Endothelial cell of umbilical vein (primary cell): ENCODE measurements at regions of chr10 and their contacts with region 1.

Region 1: GRCh38 chr10:122051251-122051996 is 62.5 kb downstream of the TACC2 start:
- DNase-seq: peak; percentile 77
- H3K4me3 ChIP-seq: no peak overlapping the region
- H3K27ac ChIP-seq: no peak overlapping the region
- H3K4me1 ChIP-seq: peaks cover 15% of the 10 kb centered on the region
- H3K27me3 ChIP-seq: no peaks in the 10 kb centered on the region
- CTCF ChIP-seq: peak; percentile 75 to 89
- POLR2A ChIP-seq: no peak

Region 2: DNA sequence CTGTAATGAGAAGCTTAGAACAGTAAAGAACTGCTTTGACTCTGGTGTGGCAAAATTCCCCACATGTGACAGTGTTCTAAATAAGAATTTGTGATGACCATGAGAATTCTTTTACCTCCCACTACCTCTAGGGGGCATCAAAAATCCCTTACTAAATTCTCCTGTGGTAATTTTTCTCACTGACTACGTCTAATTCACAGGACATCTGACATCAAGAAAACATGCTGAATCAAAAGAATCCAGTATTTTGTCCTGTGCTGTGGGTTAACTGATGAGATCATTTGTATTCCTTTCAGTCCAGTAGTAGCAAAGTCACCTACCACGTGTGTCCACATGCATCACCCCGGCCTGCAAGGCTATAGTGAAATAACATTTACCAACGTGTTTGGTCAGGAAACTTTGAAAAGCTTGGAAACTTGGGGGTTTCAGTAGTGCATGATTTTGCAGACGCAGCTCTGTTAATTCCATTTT is 227.4 kb before region 1 on chr10:
- CTCF ChIA-PET with region 1: interaction called, 6 read pairs
- POLR2A ChIA-PET with region 1: no interaction called
- dilution Hi-C with region 1: no loop called
- intact Hi-C with region 1: loop called (anchors 5 kb)
- DNase-seq: peak; percentile 54
- H3K4me3 ChIP-seq: no peak overlapping the region
- H3K27ac ChIP-seq: no peak overlapping the region
- H3K4me1 ChIP-seq: no peaks in the 10 kb centered on the region
- H3K27me3 ChIP-seq: no peaks in the 10 kb centered on the region
- CTCF ChIP-seq: peak; percentile 40 to 59
- POLR2A ChIP-seq: no peak

Region 3: DNA sequence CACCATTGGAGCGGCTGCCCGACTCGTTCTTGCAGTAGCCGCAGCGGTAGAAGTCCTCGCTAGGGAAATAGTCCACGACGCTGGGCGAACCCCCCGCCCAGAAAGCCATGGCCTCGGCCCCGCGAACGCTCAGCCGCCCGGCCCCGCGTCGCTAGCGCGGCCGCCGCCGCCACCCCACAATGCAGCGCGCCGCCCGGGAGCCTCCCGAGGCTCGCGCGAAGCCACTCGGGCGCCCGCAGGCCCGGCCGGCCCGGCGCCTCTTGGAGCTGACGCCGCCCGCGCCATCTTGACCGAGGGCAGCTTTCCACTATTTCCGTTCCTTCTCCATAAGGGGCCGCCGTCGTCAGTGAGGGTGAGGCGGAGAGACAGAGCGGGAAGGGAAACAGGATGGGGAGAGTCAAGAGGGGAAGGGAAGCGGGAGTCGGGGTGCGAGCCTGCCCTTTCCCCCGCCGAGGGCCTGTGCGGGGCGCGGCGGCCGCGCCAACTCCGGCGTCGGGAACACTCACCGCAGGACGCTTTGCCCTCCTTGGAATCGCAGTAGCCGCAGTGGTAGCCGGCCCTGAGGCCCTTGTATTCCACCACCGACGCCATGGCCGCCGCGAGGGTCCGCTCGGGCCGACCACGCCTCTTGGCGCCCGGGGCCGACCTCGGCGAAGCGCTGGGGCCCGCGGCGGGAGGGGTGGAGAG is 123.4 kb before region 1 on chr10 and contains the start of gene ATE1:
- CTCF ChIA-PET with region 1: interaction called, 12 read pairs
- POLR2A ChIA-PET with region 1: no interaction called
- dilution Hi-C with region 1: no loop called
- intact Hi-C with region 1: loop called (anchors 1 kb)
- DNase-seq: peak; percentile 94
- H3K4me3 ChIP-seq: peak within 1 kb of the TSS; percentile 61 to 97 (median 93)
- H3K27ac ChIP-seq: peak within 1 kb of the TSS; percentile 91
- H3K4me1 ChIP-seq: peaks cover 11% of the 10 kb centered on the region
- H3K27me3 ChIP-seq: no peaks in the 10 kb centered on the region
- CTCF ChIP-seq: no peak
- POLR2A ChIP-seq: peak; percentile 83
- total RNA-seq, gene ATE1: 19.1 and 27.1 TPM in 2 replicates

Region 4: GRCh38 chr10:122062831-122063674 is 11.6 kb after region 1 on chr10:
- CTCF ChIA-PET with region 1: interaction called, 34 read pairs
- POLR2A ChIA-PET with region 1: no interaction called
- dilution Hi-C with region 1: no loop called
- intact Hi-C with region 1: loop called (anchors 1 kb)
- DNase-seq: peak; percentile 90
- H3K4me3 ChIP-seq: no peak overlapping the region
- H3K27ac ChIP-seq: peak overlapping the region; percentile 14
- H3K4me1 ChIP-seq: peaks cover 8% of the 10 kb centered on the region
- H3K27me3 ChIP-seq: no peaks in the 10 kb centered on the region
- CTCF ChIP-seq: no peak
- POLR2A ChIP-seq: no peak

Region 5: DNA sequence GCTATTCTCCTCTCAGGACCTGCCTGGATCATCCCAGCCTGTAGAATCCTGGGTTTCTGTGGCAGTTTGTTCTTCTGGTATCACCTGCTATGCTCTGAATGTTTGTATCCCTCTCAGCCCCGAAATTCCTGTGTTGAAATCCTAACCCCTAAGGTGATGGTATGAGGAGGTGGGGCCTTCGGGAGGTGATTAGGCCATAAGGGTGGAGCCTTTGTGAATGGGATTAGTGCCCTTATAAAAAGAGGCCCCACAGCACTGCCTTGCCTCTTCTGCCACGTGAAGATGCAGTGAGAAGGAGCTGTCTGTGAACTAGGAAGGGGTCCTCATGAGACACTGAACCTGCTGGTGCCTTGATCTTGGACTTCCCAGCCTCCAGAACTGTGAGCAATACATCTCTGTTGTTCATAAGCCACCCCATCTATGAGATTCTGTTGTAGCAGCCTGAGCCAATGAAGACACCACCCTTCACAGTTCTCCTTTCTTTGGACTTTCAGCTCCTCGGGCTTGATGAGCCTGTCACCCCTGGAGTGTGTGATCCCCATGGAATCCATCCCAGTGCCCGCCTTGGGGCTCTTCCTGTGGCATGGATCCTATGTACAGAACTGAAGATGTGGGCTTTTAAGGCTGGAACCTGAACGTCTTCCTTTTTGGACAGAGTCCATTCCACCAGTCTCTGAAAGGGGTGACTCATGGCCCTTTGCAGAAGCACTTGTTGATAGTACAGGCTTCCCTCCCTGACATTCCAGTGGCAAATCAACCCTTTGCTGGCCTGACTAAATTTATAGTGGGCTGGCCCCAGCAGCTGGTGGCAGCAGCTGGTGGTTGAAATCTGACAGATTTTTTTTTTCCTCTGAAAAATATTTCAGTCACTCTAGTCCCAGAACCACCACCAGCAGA is 75.6 kb after region 1 on chr10:
- CTCF ChIA-PET with region 1: interaction called, 7 read pairs
- POLR2A ChIA-PET with region 1: no interaction called
- dilution Hi-C with region 1: no loop called
- intact Hi-C with region 1: loop called (anchors 5 kb)
- DNase-seq: peak; percentile 92
- H3K4me3 ChIP-seq: no peak overlapping the region
- H3K27ac ChIP-seq: peak overlapping the region; percentile 77
- H3K4me1 ChIP-seq: peaks cover 23% of the 10 kb centered on the region
- H3K27me3 ChIP-seq: no peaks in the 10 kb centered on the region
- CTCF ChIP-seq: no peak
- POLR2A ChIP-seq: no peak

Region 6: GRCh38 chr10:122267849-122268737 is 216.7 kb after region 1 on chr10:
- CTCF ChIA-PET with region 1: interaction called, 13 read pairs
- POLR2A ChIA-PET with region 1: no interaction called
- dilution Hi-C with region 1: no loop called
- intact Hi-C with region 1: loop called (anchors 1 kb)
- DNase-seq: peak; percentile 47
- H3K4me3 ChIP-seq: no peak overlapping the region
- H3K27ac ChIP-seq: peak overlapping the region; percentile 74
- H3K4me1 ChIP-seq: peaks cover 20% of the 10 kb centered on the region
- H3K27me3 ChIP-seq: no peaks in the 10 kb centered on the region
- CTCF ChIP-seq: peak; percentile 96 to 97
- POLR2A ChIP-seq: no peak